CD8-positive, alpha-beta memory T cell (primary cell): ENCODE measurements at regions of chr1 and their contacts with region 1.

Region 1: GRCh38 chr1:206935491-206936067 is 10.7 kb downstream of the PIGR start:
- DNase-seq: peak in 3 of 5 donors; percentile 13 to 49 (median 18)
- H3K4me3 ChIP-seq: no peak overlapping the region
- H3K4me3 Mint-ChIP-seq: no peak overlapping the region
- H3K27ac ChIP-seq: no peak overlapping the region
- H3K27ac Mint-ChIP-seq: no peak overlapping the region
- H3K4me1 ChIP-seq: peaks cover 16% of the 10 kb centered on the region
- H3K4me1 Mint-ChIP-seq: peaks cover 18 to 25% (median 24%) of the 10 kb centered on the region in 3 donors
- H3K27me3 ChIP-seq: no peaks in the 10 kb centered on the region
- H3K27me3 Mint-ChIP-seq: peaks cover 0 to 4% of the 10 kb centered on the region in 2 donors

Region 2: GRCh38 chr1:206865013-206865671 is 70.4 kb before region 1 on chr1 and contains the start of gene IL20:
- CTCF ChIA-PET with region 1: interaction called, 11 read pairs
- POLR2A ChIA-PET with region 1: no interaction called
- DNase-seq: peak; percentile 67 to 87 (median 79)
- H3K4me3 ChIP-seq: no peak within 1 kb of the TSS
- H3K4me3 Mint-ChIP-seq: no peak within 1 kb of the TSS
- H3K27ac ChIP-seq: no peak within 1 kb of the TSS
- H3K27ac Mint-ChIP-seq: no peak within 1 kb of the TSS
- H3K4me1 ChIP-seq: no peaks in the 10 kb centered on the region
- H3K4me1 Mint-ChIP-seq: peaks cover 0 to 5% (median 2%) of the 10 kb centered on the region in 3 donors
- H3K27me3 ChIP-seq: no peaks in the 10 kb centered on the region
- H3K27me3 Mint-ChIP-seq: peaks cover 17 to 25% of the 10 kb centered on the region in 2 donors
- total RNA-seq, gene IL20: not detected

Region 3: GRCh38 chr1:206918076-206918475 is 17.5 kb before region 1 on chr1:
- CTCF ChIA-PET with region 1: interaction called, 138 read pairs
- POLR2A ChIA-PET with region 1: interaction called, 8 read pairs
- DNase-seq: no peak
- H3K4me3 ChIP-seq: peak overlapping the region; percentile 81
- H3K4me3 Mint-ChIP-seq: no peak overlapping the region
- H3K27ac ChIP-seq: no peak overlapping the region
- H3K27ac Mint-ChIP-seq: peak overlapping the region in 6 of 8 donors; percentile 79 to 96 (median 94)
- H3K4me1 ChIP-seq: peaks cover 70% of the 10 kb centered on the region
- H3K4me1 Mint-ChIP-seq: peaks cover 68 to 71% (median 70%) of the 10 kb centered on the region in 3 donors
- H3K27me3 ChIP-seq: no peaks in the 10 kb centered on the region
- H3K27me3 Mint-ChIP-seq: peaks cover 0 to 1% of the 10 kb centered on the region in 2 donors

Region 4: DNA sequence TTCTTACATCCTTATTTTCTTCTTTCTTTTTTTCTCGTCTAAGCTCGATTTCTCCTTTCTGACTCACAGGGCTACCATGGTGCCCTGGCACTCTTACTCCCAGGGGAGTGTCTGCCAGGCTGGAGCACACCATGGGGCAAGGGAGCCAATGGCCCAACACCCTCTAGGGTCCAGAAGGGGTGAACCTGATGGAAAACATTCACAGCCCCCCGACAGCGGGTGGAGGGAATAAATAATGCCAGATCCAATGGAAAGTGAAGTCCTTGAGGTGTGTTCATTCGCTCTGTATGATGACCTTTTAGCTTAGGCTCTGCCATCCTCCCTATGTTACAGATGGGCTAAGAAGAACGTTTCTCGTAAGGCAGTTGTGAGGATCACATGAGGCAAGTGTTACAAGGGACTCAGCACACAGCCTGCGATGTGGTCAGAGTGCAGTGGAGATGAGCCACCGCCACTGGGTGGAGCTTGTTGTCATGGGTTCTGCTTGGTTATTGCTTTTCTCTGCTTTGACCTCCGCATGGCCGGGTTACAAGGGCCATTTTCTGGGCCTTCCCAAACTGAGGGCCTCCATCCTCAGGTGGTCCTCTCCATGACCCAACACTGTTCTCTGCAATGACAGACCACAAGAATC is 10.4 kb before region 1 on chr1:
- CTCF ChIA-PET with region 1: interaction called, 48 read pairs
- POLR2A ChIA-PET with region 1: interaction called, 8 read pairs
- DNase-seq: peak; percentile 32 to 83 (median 63)
- H3K4me3 ChIP-seq: no peak overlapping the region
- H3K4me3 Mint-ChIP-seq: no peak overlapping the region
- H3K27ac ChIP-seq: peak overlapping the region; percentile 27
- H3K27ac Mint-ChIP-seq: no peak overlapping the region
- H3K4me1 ChIP-seq: peaks cover 51% of the 10 kb centered on the region
- H3K4me1 Mint-ChIP-seq: peaks cover 28 to 35% (median 29%) of the 10 kb centered on the region in 3 donors
- H3K27me3 ChIP-seq: no peaks in the 10 kb centered on the region
- H3K27me3 Mint-ChIP-seq: no peaks in the 10 kb centered on the region

Region 5: DNA sequence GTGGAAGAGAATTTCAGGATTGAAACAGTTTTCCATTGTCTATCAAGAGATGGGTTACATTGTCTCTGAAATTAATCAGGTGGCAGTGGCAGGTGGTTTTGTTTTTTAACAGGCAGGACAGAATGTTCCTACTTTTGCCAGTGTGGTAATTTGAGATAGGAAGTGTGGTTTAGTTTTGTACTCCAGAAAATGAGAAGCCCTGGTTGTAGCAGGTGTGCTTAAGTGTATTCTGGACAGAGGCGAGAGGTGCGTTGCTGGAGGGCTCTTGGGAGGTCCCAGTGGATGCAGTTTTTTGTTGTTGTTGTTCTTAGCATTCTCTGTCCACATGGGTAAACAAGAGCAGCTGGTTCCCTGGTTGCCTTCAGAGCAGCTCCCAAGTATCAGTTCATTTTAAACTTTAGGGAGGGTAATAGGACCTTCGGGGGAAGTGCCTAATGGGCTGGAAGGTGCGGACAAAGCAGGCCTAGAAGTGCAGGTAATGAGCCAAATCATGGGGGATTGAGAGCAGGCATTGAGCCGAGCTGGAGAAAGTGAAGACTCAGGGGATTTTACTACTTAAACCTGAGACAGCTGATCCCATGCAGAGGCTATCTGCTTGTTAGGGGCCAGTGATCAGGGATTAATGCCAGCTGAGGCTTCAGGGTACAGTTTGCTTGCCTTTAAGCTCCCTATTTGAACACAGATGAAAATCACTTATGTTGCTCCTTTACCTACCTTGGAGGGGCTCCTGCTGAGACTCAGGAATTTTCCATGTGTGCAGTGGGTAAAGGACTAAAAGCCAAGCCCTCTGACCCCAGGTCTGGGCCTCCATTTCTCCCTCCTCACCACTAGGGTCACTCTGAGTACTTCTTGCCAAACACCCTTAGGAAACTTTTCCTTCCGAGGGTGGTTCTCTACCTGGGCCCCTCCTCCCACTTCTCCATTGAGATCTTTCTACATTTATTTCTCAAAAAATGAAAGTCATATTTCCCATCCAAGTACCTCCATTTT is 123.6 kb after region 1 on chr1:
- CTCF ChIA-PET with region 1: no interaction called
- POLR2A ChIA-PET with region 1: no interaction called
- DNase-seq: no peak
- H3K4me3 ChIP-seq: no peak overlapping the region
- H3K4me3 Mint-ChIP-seq: no peak overlapping the region
- H3K27ac ChIP-seq: no peak overlapping the region
- H3K27ac Mint-ChIP-seq: peak overlapping the region in 2 of 8 donors; percentile 1 to 71
- H3K4me1 ChIP-seq: no peaks in the 10 kb centered on the region
- H3K4me1 Mint-ChIP-seq: peaks cover 0 to 4% (median 3%) of the 10 kb centered on the region in 3 donors
- H3K27me3 ChIP-seq: no peaks in the 10 kb centered on the region
- H3K27me3 Mint-ChIP-seq: peaks cover 2 to 4% of the 10 kb centered on the region in 2 donors